ENCODE measurements at regions of chr1 and their contacts with region 1.

Region 1: GRCh38 chr1:116881879-116882520 is 27.7 kb upstream of the PTGFRN start:
- DNase-seq: peak; percentile 51
- ATAC-seq: peak; percentile 81
- H3K4me3 Mint-ChIP-seq: no peak overlapping the region
- H3K27ac Mint-ChIP-seq: 0 out of 2 replicates have a peak overlapping the region, but pooled peaks have one; percentile 69
- H3K4me1 Mint-ChIP-seq: peaks cover 14% of the 10 kb centered on the region
- H3K27me3 Mint-ChIP-seq: no peaks in the 10 kb centered on the region
- CTCF ChIP-seq: no peak

Region 2: GRCh38 chr1:116748272-116748671 is 133.7 kb before region 1 on chr1:
- CTCF ChIA-PET with region 1: no interaction called
- POLR2A ChIA-PET with region 1: no interaction called
- DNase-seq: no peak
- ATAC-seq: no peak
- H3K4me3 Mint-ChIP-seq: no peak overlapping the region
- H3K27ac Mint-ChIP-seq: no peak overlapping the region
- H3K4me1 Mint-ChIP-seq: no peaks in the 10 kb centered on the region
- H3K27me3 Mint-ChIP-seq: peaks cover 12% of the 10 kb centered on the region
- CTCF ChIP-seq: no peak

Region 3: DNA sequence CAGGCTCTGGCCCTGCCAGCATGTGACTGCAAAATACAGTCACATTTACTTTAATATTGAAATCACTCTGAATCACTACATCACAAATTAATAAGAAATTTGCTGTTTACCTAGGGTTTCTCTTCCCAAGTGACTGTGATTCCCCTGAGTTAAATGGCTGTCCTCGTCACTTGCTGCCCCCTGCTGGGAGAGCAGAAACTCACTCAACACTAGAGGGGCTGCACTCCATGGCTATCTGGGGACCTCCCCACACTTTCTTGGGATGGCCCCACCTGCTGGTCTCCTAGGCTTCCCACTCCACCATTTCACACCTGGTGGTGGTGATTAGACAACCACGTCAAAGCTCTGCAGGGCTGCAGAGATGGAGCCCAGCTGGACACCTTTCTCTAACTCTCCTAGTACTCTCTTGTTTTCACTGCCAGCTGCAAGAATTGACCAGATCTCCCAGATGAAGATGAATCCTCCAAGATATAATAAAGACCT is 64.4 kb before region 1 on chr1:
- CTCF ChIA-PET with region 1: interaction called, 10 read pairs
- POLR2A ChIA-PET with region 1: no interaction called
- DNase-seq: peak; percentile 75
- ATAC-seq: peak; percentile 99
- H3K4me3 Mint-ChIP-seq: no peak overlapping the region
- H3K27ac Mint-ChIP-seq: no peak overlapping the region; the same call in 1 of the 2 replicates
- H3K4me1 Mint-ChIP-seq: peaks cover 9% of the 10 kb centered on the region; the same call in 1 of the 2 replicates
- H3K27me3 Mint-ChIP-seq: peaks cover 2% of the 10 kb centered on the region; the same call in 1 of the 2 replicates
- CTCF ChIP-seq: 0 out of 2 replicates have a peak, but pooled peaks have one; percentile 34

Region 4: DNA sequence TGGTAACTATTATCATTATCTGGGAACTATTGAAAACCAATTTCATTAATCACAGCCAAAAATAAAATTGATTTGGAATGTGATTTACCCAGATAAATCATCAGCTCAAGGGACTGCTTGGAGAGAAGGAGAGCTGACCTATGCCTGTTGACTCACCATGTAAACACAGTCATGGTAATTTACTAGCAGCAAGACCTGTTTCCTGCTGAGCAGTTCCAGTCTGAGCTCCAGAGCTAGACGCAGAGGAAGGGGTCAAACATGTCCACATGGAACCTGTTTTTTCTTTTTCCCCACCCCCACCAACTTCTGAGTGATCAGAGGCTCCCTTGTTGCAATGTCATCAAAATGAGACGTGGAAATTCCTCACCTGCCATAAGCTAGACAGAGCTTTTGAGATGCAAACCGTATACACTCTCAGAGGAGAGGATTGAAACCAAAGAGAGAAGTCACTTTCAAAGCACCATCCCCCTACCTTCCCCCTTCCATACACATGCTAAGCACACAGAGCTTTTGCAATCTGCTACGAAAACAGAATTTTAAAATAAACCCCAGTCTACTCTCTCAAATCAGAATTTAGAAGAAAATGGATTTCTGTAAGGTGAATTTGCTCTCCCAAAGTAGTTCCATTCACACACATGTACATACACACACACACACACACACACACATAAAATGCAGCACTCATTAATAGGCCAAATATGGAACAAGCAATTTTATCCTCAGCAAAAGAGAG is 28.2 kb before region 1 on chr1:
- CTCF ChIA-PET with region 1: interaction called, 12 read pairs
- POLR2A ChIA-PET with region 1: interaction called, 6 read pairs
- DNase-seq: no peak
- ATAC-seq: peak; percentile 87
- H3K4me3 Mint-ChIP-seq: peak overlapping the region; percentile 49
- H3K27ac Mint-ChIP-seq: peak overlapping the region; percentile 97
- H3K4me1 Mint-ChIP-seq: peaks cover 58% of the 10 kb centered on the region
- H3K27me3 Mint-ChIP-seq: no peaks in the 10 kb centered on the region
- CTCF ChIP-seq: no peak